ENCODE measurements at regions of chr2 and their contacts with region 1.

Region 1: GRCh38 chr2:148509288-148509902 is 135.2 kb upstream of the EPC2 start:
- DNase-seq: peak; percentile 93
- ATAC-seq: peak; percentile 100
- H3K4me3 Mint-ChIP-seq: peak overlapping the region; percentile 62
- H3K27ac Mint-ChIP-seq: peak overlapping the region; percentile 71
- H3K4me1 Mint-ChIP-seq: peaks cover 17% of the 10 kb centered on the region
- H3K27me3 Mint-ChIP-seq: no peaks in the 10 kb centered on the region

Region 2: DNA sequence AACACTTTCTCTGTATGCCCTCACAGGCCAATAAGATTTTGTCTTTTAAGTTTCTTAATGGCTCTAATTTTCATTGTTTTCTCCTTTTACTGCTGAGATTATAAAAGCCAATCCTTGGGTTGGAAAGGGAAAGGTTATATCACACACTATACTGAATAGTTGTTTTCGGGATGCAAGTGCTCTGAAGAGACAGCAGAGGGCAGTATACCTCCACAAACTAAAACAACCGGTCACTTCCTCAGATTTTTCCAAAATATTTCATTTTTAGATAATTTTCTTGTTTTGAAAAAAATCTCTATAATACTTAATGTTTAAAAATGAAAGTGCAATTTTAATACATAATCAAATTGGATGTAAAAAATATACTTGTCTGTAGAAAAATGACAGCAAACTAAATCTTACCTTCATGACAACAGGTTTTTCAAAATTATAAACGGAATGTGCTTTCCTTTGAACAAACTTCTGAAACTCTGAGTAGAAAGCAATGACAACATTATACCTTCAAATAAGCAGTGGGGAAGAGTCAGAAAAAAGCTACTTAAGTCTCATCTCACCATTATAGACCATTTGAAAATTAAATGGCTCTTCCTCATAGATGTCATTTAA is 571.5 kb before region 1 on chr2:
- CTCF ChIA-PET with region 1: interaction called, 7 read pairs
- POLR2A ChIA-PET with region 1: no interaction called
- intact Hi-C with region 1: loop called (anchors 1 kb)
- DNase-seq: no peak
- ATAC-seq: no peak
- H3K4me3 Mint-ChIP-seq: no peak overlapping the region
- H3K27ac Mint-ChIP-seq: no peak overlapping the region
- H3K4me1 Mint-ChIP-seq: no peaks in the 10 kb centered on the region
- H3K27me3 Mint-ChIP-seq: no peaks in the 10 kb centered on the region

Region 3: DNA sequence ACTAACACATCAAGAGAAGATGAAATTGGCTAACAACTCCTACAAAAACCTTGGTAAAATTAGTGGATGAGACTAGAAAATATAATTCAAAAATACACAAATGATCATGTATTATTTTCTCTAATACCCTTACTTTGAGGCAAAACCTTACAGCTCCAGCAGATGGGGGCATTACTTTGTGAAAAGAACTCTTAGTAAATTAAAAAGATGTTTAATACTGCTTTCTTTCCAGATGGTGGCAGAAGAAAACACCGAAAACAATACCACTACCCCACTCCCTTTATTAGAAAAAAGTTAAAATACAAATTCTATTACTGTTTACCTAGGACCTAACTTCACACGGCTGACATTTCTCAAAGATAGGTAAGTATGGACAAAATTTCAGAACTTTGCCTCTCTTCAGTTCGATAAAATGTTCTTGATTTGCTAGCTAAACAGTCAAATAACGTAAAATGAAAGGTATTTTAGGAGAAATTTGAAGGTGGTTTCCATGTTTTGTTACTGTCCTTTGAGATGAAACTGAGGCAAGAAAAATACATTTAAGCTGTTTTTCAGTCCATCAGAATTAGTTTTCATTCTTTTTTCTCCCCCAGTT is 519.5 kb before region 1 on chr2:
- CTCF ChIA-PET with region 1: interaction called, 32 read pairs
- POLR2A ChIA-PET with region 1: no interaction called
- intact Hi-C with region 1: loop called (anchors 1 kb)
- DNase-seq: peak; percentile 15
- ATAC-seq: peak; percentile 47
- H3K4me3 Mint-ChIP-seq: no peak overlapping the region
- H3K27ac Mint-ChIP-seq: no peak overlapping the region
- H3K4me1 Mint-ChIP-seq: peaks cover 9% of the 10 kb centered on the region
- H3K27me3 Mint-ChIP-seq: no peaks in the 10 kb centered on the region

Region 4: GRCh38 chr2:148020111-148021058 is 489.0 kb before region 1 on chr2 and contains the start of gene ORC4:
- CTCF ChIA-PET with region 1: interaction called, 5 read pairs
- POLR2A ChIA-PET with region 1: interaction called, 8 read pairs
- intact Hi-C with region 1: loop called in 1 of 2 experiments (anchors 1 kb)
- DNase-seq: peak; percentile 99
- ATAC-seq: peak; percentile 89
- H3K4me3 Mint-ChIP-seq: peak within 1 kb of the TSS; percentile 95
- H3K27ac Mint-ChIP-seq: peak within 1 kb of the TSS; percentile 98
- H3K4me1 Mint-ChIP-seq: peaks cover 44% of the 10 kb centered on the region
- H3K27me3 Mint-ChIP-seq: no peaks in the 10 kb centered on the region
- total RNA-seq, gene ORC4: 41.2 to 41.8 TPM

Region 5: DNA sequence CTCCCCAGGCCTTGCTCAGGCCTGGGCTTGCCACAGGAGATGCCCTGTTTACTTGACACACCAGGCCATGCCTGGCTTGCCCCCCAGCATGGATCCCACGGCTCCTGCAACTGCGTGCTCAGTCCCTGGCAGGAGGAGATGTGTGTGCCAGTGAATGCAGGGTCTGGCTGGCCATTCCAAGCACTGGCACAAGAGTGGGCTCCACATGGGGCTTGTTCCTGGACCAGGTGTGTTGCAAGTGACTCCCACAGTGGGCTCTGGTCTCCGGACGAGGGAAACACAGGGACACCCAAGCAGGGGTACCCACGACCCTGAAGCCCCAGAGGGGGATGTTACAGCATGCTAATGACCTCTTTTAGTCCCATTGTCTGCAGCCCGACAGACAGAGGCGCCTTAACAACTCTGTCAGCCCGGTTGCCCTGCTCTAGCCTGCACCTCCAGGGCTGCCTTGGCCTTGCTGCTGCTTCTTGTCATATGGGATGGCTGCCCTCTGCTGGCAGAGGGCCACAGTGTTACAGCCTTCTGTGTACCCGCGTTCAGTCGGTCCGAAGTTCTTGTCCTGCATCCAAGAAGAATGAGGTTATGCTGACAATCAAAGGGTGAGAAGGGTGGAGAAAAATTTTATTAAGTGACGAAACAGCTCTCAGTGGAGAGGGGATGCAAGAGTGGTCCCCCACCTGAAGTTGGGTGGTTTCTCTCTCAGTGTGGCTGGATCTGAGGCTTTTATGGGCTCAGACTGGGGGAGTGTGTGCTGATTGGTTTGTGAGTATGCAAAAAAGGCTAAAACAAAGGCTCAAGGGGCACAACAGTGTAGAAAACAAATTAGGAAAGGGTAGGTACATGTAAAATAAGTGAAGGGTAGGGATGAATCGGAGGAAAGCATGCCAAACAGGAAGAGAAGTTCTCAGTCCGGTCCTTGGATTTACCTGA is 308.1 kb before region 1 on chr2:
- CTCF ChIA-PET with region 1: no interaction called
- POLR2A ChIA-PET with region 1: no interaction called
- intact Hi-C with region 1: loop called in 1 of 2 experiments (anchors 5 kb)
- DNase-seq: peak; percentile 70
- ATAC-seq: peak; percentile 84
- H3K4me3 Mint-ChIP-seq: no peak overlapping the region
- H3K27ac Mint-ChIP-seq: no peak overlapping the region
- H3K4me1 Mint-ChIP-seq: no peaks in the 10 kb centered on the region
- H3K27me3 Mint-ChIP-seq: no peaks in the 10 kb centered on the region

Region 6: GRCh38 chr2:148218326-148219075 is 290.9 kb before region 1 on chr2:
- CTCF ChIA-PET with region 1: no interaction called
- POLR2A ChIA-PET with region 1: no interaction called
- intact Hi-C with region 1: no loop called
- DNase-seq: no peak
- ATAC-seq: no peak
- H3K4me3 Mint-ChIP-seq: no peak overlapping the region
- H3K27ac Mint-ChIP-seq: no peak overlapping the region
- H3K4me1 Mint-ChIP-seq: no peaks in the 10 kb centered on the region
- H3K27me3 Mint-ChIP-seq: no peaks in the 10 kb centered on the region

Region 7: DNA sequence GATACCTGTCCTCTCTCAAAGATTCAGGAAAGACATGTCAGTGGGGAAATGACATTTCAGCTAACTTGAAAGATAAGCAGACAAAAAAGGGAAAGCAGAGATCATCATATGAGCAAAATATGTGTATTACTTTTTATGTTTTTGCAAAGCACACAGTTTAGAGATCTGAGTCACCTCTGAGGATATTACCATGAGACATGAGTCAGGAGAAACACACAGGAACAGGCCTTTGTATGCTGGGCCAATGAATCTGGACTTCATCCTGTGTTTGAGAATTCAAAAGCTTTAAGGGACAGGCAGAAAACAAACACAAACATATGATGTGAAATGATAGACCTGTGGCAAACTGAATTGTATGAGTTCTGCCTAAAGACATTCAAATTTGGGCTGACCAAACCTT is 170.9 kb before region 1 on chr2:
- CTCF ChIA-PET with region 1: no interaction called
- POLR2A ChIA-PET with region 1: no interaction called
- intact Hi-C with region 1: no loop called
- DNase-seq: no peak
- ATAC-seq: peak; percentile 78
- H3K4me3 Mint-ChIP-seq: no peak overlapping the region
- H3K27ac Mint-ChIP-seq: no peak overlapping the region
- H3K4me1 Mint-ChIP-seq: no peaks in the 10 kb centered on the region
- H3K27me3 Mint-ChIP-seq: no peaks in the 10 kb centered on the region

Region 8: GRCh38 chr2:148495586-148495985 is 13.8 kb before region 1 on chr2:
- CTCF ChIA-PET with region 1: interaction called, 26 read pairs
- POLR2A ChIA-PET with region 1: interaction called, 4 read pairs
- intact Hi-C with region 1: no loop called
- DNase-seq: no peak
- ATAC-seq: no peak
- H3K4me3 Mint-ChIP-seq: no peak overlapping the region
- H3K27ac Mint-ChIP-seq: no peak overlapping the region
- H3K4me1 Mint-ChIP-seq: peaks cover 4% of the 10 kb centered on the region
- H3K27me3 Mint-ChIP-seq: no peaks in the 10 kb centered on the region

Region 9: DNA sequence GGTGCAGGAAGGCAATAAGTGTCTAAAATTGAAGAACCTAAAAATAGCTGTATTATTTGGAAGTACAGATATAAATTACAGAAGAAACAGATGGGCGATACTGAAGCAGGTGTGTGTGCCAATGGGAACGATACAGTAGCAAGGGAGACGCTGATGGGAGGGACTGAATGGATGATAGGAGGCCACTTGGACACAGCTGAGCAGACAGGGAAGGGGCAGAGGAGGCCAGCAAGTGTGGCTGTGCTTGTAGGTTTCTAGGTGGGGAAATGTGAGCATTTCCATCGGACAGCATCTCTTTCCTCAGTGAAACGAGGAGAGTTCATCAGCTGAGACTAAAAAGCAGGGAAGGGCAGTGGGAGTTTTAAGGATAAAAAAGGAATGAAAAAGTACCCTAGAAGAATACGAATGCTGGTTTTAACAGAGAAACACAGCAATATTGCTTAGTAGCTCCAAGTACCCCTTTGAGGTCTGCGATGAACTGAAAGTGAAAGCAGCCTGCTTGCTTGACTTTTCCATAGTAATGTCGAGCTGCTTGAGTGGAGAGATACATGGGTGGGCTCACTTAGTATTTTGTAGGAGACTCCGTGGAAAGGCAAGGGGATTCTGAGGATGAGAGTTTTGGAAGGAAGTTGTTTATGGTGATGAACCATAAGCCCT is 43.4 kb after region 1 on chr2:
- CTCF ChIA-PET with region 1: interaction called, 14 read pairs
- POLR2A ChIA-PET with region 1: no interaction called
- intact Hi-C with region 1: no loop called
- DNase-seq: peak; percentile 51
- ATAC-seq: peak; percentile 78
- H3K4me3 Mint-ChIP-seq: no peak overlapping the region
- H3K27ac Mint-ChIP-seq: no peak overlapping the region
- H3K4me1 Mint-ChIP-seq: peaks cover 2% of the 10 kb centered on the region
- H3K27me3 Mint-ChIP-seq: no peaks in the 10 kb centered on the region

Region 10: DNA sequence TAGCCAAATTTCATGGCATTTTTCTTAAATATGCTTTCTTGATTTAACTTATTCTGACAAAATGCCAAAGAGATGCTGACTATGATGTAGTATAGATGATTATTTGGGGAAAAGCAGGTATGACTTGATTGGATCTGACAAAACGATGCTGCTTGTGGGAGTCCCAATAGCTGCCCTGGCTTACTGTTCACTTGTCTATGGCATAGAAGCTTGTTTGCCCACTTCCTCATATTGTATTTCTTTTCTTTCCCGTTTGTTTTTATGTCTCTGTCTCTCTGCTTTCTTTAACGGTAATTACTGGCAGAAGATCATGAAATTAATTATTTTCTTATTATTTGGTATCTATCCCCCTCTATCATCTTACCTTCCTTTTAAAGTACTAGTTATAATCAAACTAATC is 178.1 kb after region 1 on chr2:
- CTCF ChIA-PET with region 1: no interaction called
- POLR2A ChIA-PET with region 1: no interaction called
- intact Hi-C with region 1: no loop called
- DNase-seq: no peak
- ATAC-seq: no peak
- H3K4me3 Mint-ChIP-seq: no peak overlapping the region
- H3K27ac Mint-ChIP-seq: no peak overlapping the region
- H3K4me1 Mint-ChIP-seq: peaks cover 34% of the 10 kb centered on the region
- H3K27me3 Mint-ChIP-seq: no peaks in the 10 kb centered on the region

Measured in activated CD4-positive, alpha-beta T cell treated with anti-CD3 and anti-CD28 coated beads for 36 hours (primary cell).